ENCODE measurements at regions of chr9 and their contacts with region 1.

Region 1: DNA sequence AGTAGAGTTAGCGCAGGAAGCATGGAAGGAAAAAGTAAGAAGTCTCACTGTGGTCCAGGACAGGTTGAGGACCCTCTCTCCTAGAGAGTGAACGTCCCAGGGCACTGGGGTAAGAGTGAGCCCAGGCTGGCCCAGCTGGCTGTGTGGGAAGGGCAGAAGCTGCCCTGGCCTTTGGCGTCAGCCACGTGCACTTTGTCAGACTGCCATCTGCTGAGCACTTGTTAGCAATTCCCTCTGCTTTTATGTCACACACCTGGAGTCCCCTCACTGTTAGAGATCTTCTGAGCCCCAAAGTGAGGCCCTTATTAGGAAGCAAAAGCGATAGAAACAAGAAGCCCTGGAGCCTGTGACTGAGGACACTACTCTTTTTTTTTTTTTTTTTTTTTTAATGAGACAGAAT is 79.1 kb downstream of the UGCG start:
- DNase-seq: no peak
- CTCF ChIP-seq: peak; percentile 39

Region 2: GRCh38 chr9:111965566-111966019 is 10.1 kb before region 1 on chr9:
- CTCF ChIA-PET with region 1: interaction called, 41 read pairs
- POLR2A ChIA-PET with region 1: no interaction called
- DNase-seq: peak; percentile 71
- CTCF ChIP-seq: no peak

Region 3: GRCh38 chr9:111992523-111992922 is 16.8 kb after region 1 on chr9:
- CTCF ChIA-PET with region 1: interaction called, 14 read pairs
- POLR2A ChIA-PET with region 1: interaction called, 5 read pairs
- DNase-seq: peak; percentile 69
- CTCF ChIP-seq: no peak